ENCODE measurements at regions of chr15 and their contacts with region 1.

Region 1: DNA sequence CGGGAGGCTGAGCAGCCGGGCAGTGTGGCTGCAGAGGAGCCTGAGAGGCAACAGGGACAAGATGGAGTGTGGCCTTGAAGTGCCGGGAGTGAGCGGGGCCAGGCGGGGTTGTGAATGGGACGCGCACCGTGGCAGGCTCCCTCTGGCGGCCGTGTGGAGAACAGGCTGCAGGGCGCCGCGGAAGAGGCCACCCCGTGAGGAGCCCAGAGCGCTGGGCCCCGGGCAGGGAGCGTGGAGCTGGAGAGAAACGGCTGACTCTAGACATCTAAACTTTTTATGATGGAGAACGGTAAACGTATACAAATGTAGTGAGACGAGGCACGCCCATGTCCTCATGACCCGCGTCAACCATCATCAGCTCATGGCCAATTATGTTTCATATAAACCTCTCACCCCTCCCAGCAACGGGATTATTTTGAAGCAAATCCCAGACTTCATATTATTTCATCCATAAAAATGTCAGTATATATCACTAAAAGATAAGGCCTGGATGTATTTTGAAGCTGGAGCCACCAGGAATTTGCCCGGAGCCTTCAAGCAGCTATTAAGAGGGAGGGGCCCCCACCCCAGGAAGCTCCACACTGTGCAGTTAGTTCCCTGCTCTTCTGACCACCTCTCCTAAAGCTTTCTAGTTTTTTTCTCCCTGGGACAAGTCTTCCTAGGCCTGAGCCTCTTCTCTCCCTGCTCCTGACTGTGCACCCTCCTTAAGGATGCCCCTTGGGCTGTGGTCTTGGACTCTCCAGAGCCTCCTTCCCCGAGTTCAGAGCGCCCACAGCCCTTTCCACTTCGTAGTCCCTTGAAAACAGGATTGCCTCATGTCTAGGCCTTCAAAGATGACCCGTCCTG is 149.4 kb downstream of the SMAD6 start:
- DNase-seq: peak; percentile 89 to 95 (median 92)
- H3K4me3 ChIP-seq: no peak overlapping the region
- H3K27ac ChIP-seq: peak overlapping the region in 1 of 2 donors; percentile 50
- H3K4me1 ChIP-seq: peaks cover 12% of the 10 kb centered on the region
- H3K27me3 ChIP-seq: no peaks in the 10 kb centered on the region
- CTCF ChIP-seq: peak; percentile 98
- EP300 ChIP-seq: no peak
- POLR2A ChIP-seq: no peak

Region 2: DNA sequence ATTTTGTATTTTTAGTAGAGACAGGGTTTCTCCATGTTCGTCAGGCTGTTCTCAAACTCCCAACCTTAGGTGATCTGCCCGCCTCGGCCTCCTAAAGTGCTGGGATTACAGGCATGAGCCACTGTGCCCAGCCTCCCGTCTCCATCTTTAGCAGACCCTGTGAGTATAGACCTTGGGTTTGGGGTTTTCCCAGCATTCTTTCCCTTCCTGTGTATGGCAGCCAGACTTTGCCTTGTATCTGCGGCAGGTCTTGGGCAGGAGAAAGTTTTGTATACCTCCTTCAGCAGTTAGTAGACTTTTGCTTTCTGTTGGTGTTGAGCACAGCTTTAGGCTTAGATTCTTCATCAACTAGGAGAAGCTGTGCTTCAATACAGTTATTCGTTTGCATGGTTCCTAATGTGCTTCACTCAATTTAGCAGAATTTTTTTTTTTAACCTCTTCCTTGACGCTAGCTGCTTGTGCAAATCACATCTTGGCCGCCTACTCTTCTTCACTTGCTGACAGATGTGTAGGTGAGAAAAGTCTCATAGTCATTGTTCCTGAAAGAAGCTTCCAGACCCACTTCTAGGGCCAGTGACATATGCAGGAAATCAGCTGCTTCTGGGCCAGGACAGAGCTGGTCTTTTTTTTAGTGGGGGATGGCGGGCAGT is 426.4 kb before region 1 on chr15:
- intact Hi-C with region 1: no loop called
- DNase-seq: no peak
- H3K4me3 ChIP-seq: no peak overlapping the region
- H3K27ac ChIP-seq: no peak overlapping the region
- H3K4me1 ChIP-seq: no peaks in the 10 kb centered on the region
- H3K27me3 ChIP-seq: no peaks in the 10 kb centered on the region
- CTCF ChIP-seq: no peak
- EP300 ChIP-seq: no peak
- POLR2A ChIP-seq: no peak

Region 3: DNA sequence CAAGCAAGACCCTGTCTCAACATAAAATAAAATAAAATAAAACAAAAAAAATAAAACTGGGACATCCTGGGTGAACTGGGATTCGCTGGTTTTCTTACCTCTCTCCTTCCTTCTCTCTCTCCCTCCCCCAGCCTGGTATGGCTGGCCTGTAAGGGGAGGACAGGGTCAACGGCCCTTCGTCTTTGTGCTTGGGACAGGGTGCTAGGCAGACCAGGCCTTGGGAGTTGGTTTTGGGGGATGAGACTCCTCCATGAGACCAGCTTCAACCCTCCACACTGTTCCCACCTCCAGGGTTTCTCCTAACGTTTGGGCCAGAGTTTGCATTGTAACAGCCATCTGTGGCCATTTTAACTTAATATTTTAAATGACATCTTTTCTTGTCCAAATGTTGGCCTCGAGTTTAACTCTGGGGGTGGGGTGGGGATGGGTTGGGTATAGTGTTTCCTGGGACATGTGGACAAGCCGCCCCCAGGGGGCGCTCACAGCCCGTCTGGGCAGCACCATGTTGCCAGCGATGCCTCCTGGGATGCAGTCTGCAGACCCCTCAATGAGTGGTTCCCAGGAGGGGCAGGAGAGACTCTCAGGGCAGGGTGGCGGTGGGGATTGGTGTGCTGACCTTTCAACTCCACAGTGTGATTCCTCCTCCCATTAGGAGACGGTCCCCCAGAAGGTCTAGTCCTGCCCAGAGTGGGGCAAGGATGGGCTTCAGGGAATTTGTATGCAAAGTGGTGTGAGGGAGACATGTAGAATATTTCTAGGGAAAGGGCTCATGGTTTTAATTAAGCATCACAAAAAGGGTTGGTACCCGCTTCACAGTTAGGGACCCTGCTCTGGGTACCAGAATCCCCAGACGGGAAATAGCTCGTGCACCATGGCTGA is 247.9 kb before region 1 on chr15:
- intact Hi-C with region 1: loop called (anchors 5 kb)
- DNase-seq: peak; percentile 51 to 82 (median 77)
- H3K4me3 ChIP-seq: no peak overlapping the region
- H3K27ac ChIP-seq: no peak overlapping the region
- H3K4me1 ChIP-seq: no peaks in the 10 kb centered on the region
- H3K27me3 ChIP-seq: no peaks in the 10 kb centered on the region
- CTCF ChIP-seq: peak; percentile 75 to 82 (median 76)
- EP300 ChIP-seq: no peak
- POLR2A ChIP-seq: no peak

Region 4: DNA sequence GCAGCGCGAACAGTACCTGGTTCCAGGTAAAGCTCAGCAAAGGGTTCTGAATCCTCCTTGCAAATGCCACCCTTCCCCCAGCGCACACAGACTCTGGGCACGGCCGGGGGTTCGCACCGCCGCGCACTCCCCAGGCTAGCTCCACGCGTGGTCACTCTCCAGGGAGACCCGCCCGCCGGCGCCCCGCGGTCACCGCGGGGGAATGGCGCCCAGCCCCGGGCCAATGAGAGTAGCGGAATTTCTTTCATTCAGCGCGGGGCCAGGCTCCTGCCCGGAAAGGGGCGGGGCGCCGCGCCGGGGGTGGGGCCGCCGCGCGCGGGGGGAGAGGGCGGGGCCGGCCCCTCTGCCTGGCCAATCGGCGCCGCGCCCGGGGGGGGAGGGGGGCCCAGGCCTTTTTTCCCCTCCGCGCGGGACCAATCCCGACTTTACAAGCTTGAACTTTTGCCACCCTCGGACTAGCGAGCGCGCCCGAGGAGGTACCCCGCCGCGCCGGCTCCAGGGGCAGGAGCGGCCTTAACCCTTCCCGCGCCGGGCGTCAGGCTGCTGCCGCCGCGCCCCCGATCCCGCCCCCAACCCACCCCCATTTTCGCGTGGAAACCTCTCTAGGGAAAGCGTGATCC is 150.5 kb before region 1 on chr15:
- intact Hi-C with region 1: loop called (anchors 2 to 10 kb)
- DNase-seq: peak; percentile 96 to 98 (median 97)
- H3K4me3 ChIP-seq: peak overlapping the region; percentile 54
- H3K27ac ChIP-seq: peak overlapping the region; percentile 65 to 76
- H3K4me1 ChIP-seq: peaks cover 11% of the 10 kb centered on the region
- H3K27me3 ChIP-seq: no peaks in the 10 kb centered on the region
- CTCF ChIP-seq: no peak
- EP300 ChIP-seq: no peak
- POLR2A ChIP-seq: no peak

Region 5: DNA sequence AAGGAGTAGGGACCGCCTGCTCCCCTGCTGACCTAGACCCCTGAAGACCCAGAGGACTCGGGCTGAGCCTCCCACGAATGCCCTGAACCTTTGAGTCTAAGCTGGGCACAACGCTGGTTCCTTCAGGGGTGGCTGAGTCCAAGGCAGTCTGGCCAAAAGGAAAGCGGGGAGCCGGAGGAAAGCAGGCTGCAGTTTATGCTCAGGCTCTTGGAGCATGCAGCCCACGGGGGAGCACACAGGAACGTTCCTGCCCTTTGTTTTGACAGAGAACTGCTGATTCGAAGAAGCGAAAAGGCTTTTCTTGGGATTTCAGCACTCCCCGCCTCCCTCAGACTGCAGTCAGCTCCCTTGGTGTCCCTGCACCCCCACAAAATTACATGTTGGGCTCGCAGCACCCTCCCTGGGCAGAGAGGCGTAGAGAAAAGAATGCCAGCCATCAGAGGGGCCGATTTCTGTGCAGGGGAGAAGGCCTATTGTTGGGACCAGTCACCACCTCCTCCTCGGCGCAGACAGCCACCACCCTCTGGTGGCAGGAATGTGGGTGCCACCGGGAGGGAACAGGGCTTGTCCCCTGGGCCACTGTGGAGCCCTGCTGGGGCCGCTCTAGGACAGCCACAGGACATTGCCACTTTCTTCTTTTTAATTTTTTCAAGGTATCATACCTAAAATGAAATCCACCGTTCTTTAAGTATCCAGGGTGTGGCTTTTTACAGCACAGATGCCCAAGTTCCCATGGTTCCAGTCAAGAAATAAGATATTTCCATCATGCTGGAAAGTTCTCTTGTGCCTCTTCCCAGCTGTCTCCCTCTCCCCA is 77.2 kb before region 1 on chr15:
- intact Hi-C with region 1: loop called in 1 of 4 experiments (anchors 5 kb)
- DNase-seq: peak; percentile 82 to 91 (median 89)
- H3K4me3 ChIP-seq: no peak overlapping the region
- H3K27ac ChIP-seq: peak overlapping the region; percentile 61 to 75
- H3K4me1 ChIP-seq: peaks cover 18% of the 10 kb centered on the region
- H3K27me3 ChIP-seq: no peaks in the 10 kb centered on the region
- CTCF ChIP-seq: peak; percentile 85 to 98 (median 98)
- EP300 ChIP-seq: no peak
- POLR2A ChIP-seq: peak; percentile 36

Measured in ovary (tissue), 10 donors.